ENCODE measurements at regions of chr2 and their contacts with region 1.

Region 1: GRCh38 chr2:101781326-101781725 is 83.8 kb downstream of the MAP4K4 start:
- DNase-seq: no peak
- H3K4me3 Mint-ChIP-seq: peak overlapping the region; percentile 42
- H3K27ac Mint-ChIP-seq: peak overlapping the region; percentile 24
- H3K4me1 Mint-ChIP-seq: peaks cover 72% of the 10 kb centered on the region
- H3K27me3 Mint-ChIP-seq: no peaks in the 10 kb centered on the region

Region 2: GRCh38 chr2:101759162-101759561 is 22.2 kb before region 1 on chr2:
- CTCF ChIA-PET with region 1: interaction called, 3 read pairs
- POLR2A ChIA-PET with region 1: no interaction called
- intact Hi-C with region 1: loop called (anchors 1 kb)
- DNase-seq: no peak
- H3K4me3 Mint-ChIP-seq: no peak overlapping the region
- H3K27ac Mint-ChIP-seq: no peak overlapping the region
- H3K4me1 Mint-ChIP-seq: peaks cover 67% of the 10 kb centered on the region
- H3K27me3 Mint-ChIP-seq: no peaks in the 10 kb centered on the region

Region 3: GRCh38 chr2:101770726-101771125 is 10.6 kb before region 1 on chr2:
- CTCF ChIA-PET with region 1: interaction called, 12 read pairs
- POLR2A ChIA-PET with region 1: no interaction called
- intact Hi-C with region 1: no loop called
- DNase-seq: peak; percentile 21
- H3K4me3 Mint-ChIP-seq: no peak overlapping the region
- H3K27ac Mint-ChIP-seq: no peak overlapping the region
- H3K4me1 Mint-ChIP-seq: peaks cover 82% of the 10 kb centered on the region
- H3K27me3 Mint-ChIP-seq: no peaks in the 10 kb centered on the region

Region 4: GRCh38 chr2:101823347-101823791 is 42.0 kb after region 1 on chr2:
- CTCF ChIA-PET with region 1: interaction called, 12 read pairs
- POLR2A ChIA-PET with region 1: no interaction called
- intact Hi-C with region 1: loop called (anchors 5 kb)
- DNase-seq: peak; percentile 81
- H3K4me3 Mint-ChIP-seq: peak overlapping the region; percentile 48
- H3K27ac Mint-ChIP-seq: peak overlapping the region; percentile 72
- H3K4me1 Mint-ChIP-seq: peaks cover 68% of the 10 kb centered on the region
- H3K27me3 Mint-ChIP-seq: no peaks in the 10 kb centered on the region

Region 5: GRCh38 chr2:101831351-101831865 is 50.1 kb after region 1 on chr2:
- CTCF ChIA-PET with region 1: interaction called, 12 read pairs
- POLR2A ChIA-PET with region 1: no interaction called
- intact Hi-C with region 1: loop called (anchors 2 kb)
- DNase-seq: peak; percentile 76
- H3K4me3 Mint-ChIP-seq: no peak overlapping the region
- H3K27ac Mint-ChIP-seq: peak overlapping the region; percentile 71
- H3K4me1 Mint-ChIP-seq: peaks cover 52% of the 10 kb centered on the region
- H3K27me3 Mint-ChIP-seq: no peaks in the 10 kb centered on the region